ENCODE measurements at regions of chr7 and their contacts with region 1.

Region 1: GRCh38 chr7:74289018-74289658 is at the start of gene CLIP2:
- DNase-seq: no peak
- ATAC-seq: peak; percentile 49
- H3K4me3 ChIP-seq: peak within 1 kb of the TSS; percentile 97
- H3K27ac ChIP-seq: peak within 1 kb of the TSS; percentile 93
- H3K4me1 ChIP-seq: peaks cover 44% of the 10 kb centered on the region
- H3K27me3 ChIP-seq: no peaks in the 10 kb centered on the region
- CTCF ChIP-seq: no peak
- EP300 ChIP-seq: no peak
- POLR2A ChIP-seq: peak; percentile 75
- RAD21 ChIP-seq: 0 out of 2 replicates have a peak, but pooled peaks have one; percentile 5
- polyA plus RNA-seq, gene CLIP2: 0.26 to 0.82 TPM

Region 2: GRCh38 chr7:73921623-73922528 is 367.3 kb before region 1 on chr7:
- CTCF ChIA-PET with region 1: no interaction called
- POLR2A ChIA-PET with region 1: no interaction called
- RAD21 ChIA-PET with region 1: no interaction called
- SMC1A ChIA-PET with region 1: no interaction called
- in situ Hi-C with region 1: no loop called
- intact Hi-C with region 1: no loop called
- DNase-seq: no peak
- ATAC-seq: no peak
- H3K4me3 ChIP-seq: no peak overlapping the region
- H3K27ac ChIP-seq: no peak overlapping the region
- H3K4me1 ChIP-seq: no peaks in the 10 kb centered on the region
- H3K27me3 ChIP-seq: no peaks in the 10 kb centered on the region
- CTCF ChIP-seq: no peak
- EP300 ChIP-seq: no peak
- POLR2A ChIP-seq: no peak
- RAD21 ChIP-seq: no peak

Region 3: GRCh38 chr7:74212656-74213055 is 76.5 kb before region 1 on chr7:
- CTCF ChIA-PET with region 1: interaction called, 93 read pairs
- POLR2A ChIA-PET with region 1: interaction called, 21 read pairs
- RAD21 ChIA-PET with region 1: interaction called, 41 read pairs
- SMC1A ChIA-PET with region 1: interaction called, 21 read pairs
- in situ Hi-C with region 1: loop called (anchors 5 kb)
- intact Hi-C with region 1: loop called (anchors 2 kb)
- DNase-seq: no peak
- ATAC-seq: no peak
- H3K4me3 ChIP-seq: peak overlapping the region; percentile 96
- H3K27ac ChIP-seq: peak overlapping the region; percentile 94
- H3K4me1 ChIP-seq: peaks cover 38% of the 10 kb centered on the region
- H3K27me3 ChIP-seq: no peaks in the 10 kb centered on the region
- CTCF ChIP-seq: no peak
- EP300 ChIP-seq: no peak
- POLR2A ChIP-seq: peak; percentile 49; the same call in 1 of the 2 replicates
- RAD21 ChIP-seq: no peak

Region 4: GRCh38 chr7:74254129-74254857 is 34.8 kb before region 1 on chr7 and contains the start of gene RFC2:
- CTCF ChIA-PET with region 1: interaction called, 10 read pairs
- POLR2A ChIA-PET with region 1: interaction called, 7 read pairs
- RAD21 ChIA-PET with region 1: interaction called, 6 read pairs
- SMC1A ChIA-PET with region 1: interaction called, 15 read pairs
- in situ Hi-C with region 1: no loop called
- intact Hi-C with region 1: loop called (anchors 1 kb)
- DNase-seq: peak; percentile 96
- ATAC-seq: peak; percentile 94
- H3K4me3 ChIP-seq: peak within 1 kb of the TSS; percentile 86
- H3K27ac ChIP-seq: peak within 1 kb of the TSS; percentile 88
- H3K4me1 ChIP-seq: peaks cover 33% of the 10 kb centered on the region
- H3K27me3 ChIP-seq: no peaks in the 10 kb centered on the region
- CTCF ChIP-seq: peak in 1 of 3 experiments; percentile 17; a peak in 1 of 6 replicates
- EP300 ChIP-seq: peak; percentile 19 to 45; a peak in 2 of 4 replicates
- POLR2A ChIP-seq: peak; percentile 96
- RAD21 ChIP-seq: no peak
- polyA plus RNA-seq, gene RFC2: 25.8 to 45.2 TPM

Region 5: GRCh38 chr7:74665296-74665938 is 376.3 kb after region 1 on chr7:
- CTCF ChIA-PET with region 1: no interaction called
- POLR2A ChIA-PET with region 1: interaction called, 7 read pairs
- RAD21 ChIA-PET with region 1: no interaction called
- SMC1A ChIA-PET with region 1: no interaction called
- in situ Hi-C with region 1: no loop called
- intact Hi-C with region 1: loop called (anchors 10 kb)
- DNase-seq: no peak
- ATAC-seq: peak; percentile 9
- H3K4me3 ChIP-seq: no peak overlapping the region
- H3K27ac ChIP-seq: peak overlapping the region; percentile 47; the same call in 1 of the 2 replicates
- H3K4me1 ChIP-seq: peaks cover 22% of the 10 kb centered on the region
- H3K27me3 ChIP-seq: no peaks in the 10 kb centered on the region
- CTCF ChIP-seq: no peak
- EP300 ChIP-seq: no peak
- POLR2A ChIP-seq: no peak
- RAD21 ChIP-seq: no peak

Measured in GM12878 (cell line).